SK-N-SH (cell line): ENCODE measurements at regions of chr1 and their contacts with region 1.

Region 1: GRCh38 chr1:88983791-88984559 is 8.5 kb downstream of the KYAT3 start:
- DNase-seq: peak; percentile 39
- H3K4me3 ChIP-seq: peak overlapping the region in 1 of 2 experiments; percentile 21; a peak in 1 of 4 replicates
- H3K27ac ChIP-seq: peak overlapping the region; percentile 83 to 90
- H3K4me1 ChIP-seq: peaks cover 18 to 44% of the 10 kb centered on the region in 2 experiments
- H3K27me3 ChIP-seq: no peaks in the 10 kb centered on the region
- CTCF ChIP-seq: peak; percentile 77
- EP300 ChIP-seq: no peak
- RAD21 ChIP-seq: peak; percentile 74

Region 2: GRCh38 chr1:88973520-88974137 is 10.3 kb before region 1 on chr1:
- CTCF ChIA-PET with region 1: interaction called, 44 read pairs
- POLR2A ChIA-PET with region 1: no interaction called
- DNase-seq: no peak
- H3K4me3 ChIP-seq: no peak overlapping the region
- H3K27ac ChIP-seq: no peak overlapping the region
- H3K4me1 ChIP-seq: no peaks in the 10 kb centered on the region; a peak in 1 of 4 replicates
- H3K27me3 ChIP-seq: no peaks in the 10 kb centered on the region
- CTCF ChIP-seq: peak; percentile 73
- EP300 ChIP-seq: no peak
- RAD21 ChIP-seq: peak; percentile 59

Region 3: GRCh38 chr1:89085781-89086180 is 101.8 kb after region 1 on chr1:
- CTCF ChIA-PET with region 1: interaction called, 11 read pairs
- POLR2A ChIA-PET with region 1: no interaction called
- DNase-seq: peak; percentile 62
- H3K4me3 ChIP-seq: no peak overlapping the region
- H3K27ac ChIP-seq: no peak overlapping the region
- H3K4me1 ChIP-seq: peaks cover 0 to 4% of the 10 kb centered on the region in 2 experiments; a peak in 1 of 4 replicates
- H3K27me3 ChIP-seq: no peaks in the 10 kb centered on the region
- CTCF ChIP-seq: peak; percentile 83
- EP300 ChIP-seq: no peak
- RAD21 ChIP-seq: peak; percentile 92

Region 4: GRCh38 chr1:89358287-89358893 is 374.4 kb after region 1 on chr1:
- CTCF ChIA-PET with region 1: interaction called, 24 read pairs
- POLR2A ChIA-PET with region 1: no interaction called
- DNase-seq: peak; percentile 57
- H3K4me3 ChIP-seq: no peak overlapping the region
- H3K27ac ChIP-seq: no peak overlapping the region
- H3K4me1 ChIP-seq: peaks cover 0 to 1% of the 10 kb centered on the region in 2 experiments; a peak in 2 of 4 replicates
- H3K27me3 ChIP-seq: no peaks in the 10 kb centered on the region
- CTCF ChIP-seq: peak; percentile 82
- EP300 ChIP-seq: 0 out of 4 replicates have a peak, but pooled peaks of 1 of the 2 experiments have one; percentile 4
- RAD21 ChIP-seq: peak; percentile 91

Region 5: GRCh38 chr1:89454845-89455521 is 471.0 kb after region 1 on chr1:
- CTCF ChIA-PET with region 1: interaction called, 13 read pairs
- POLR2A ChIA-PET with region 1: no interaction called
- DNase-seq: peak; percentile 61
- H3K4me3 ChIP-seq: no peak overlapping the region
- H3K27ac ChIP-seq: no peak overlapping the region
- H3K4me1 ChIP-seq: peaks cover 0 to 2% of the 10 kb centered on the region in 2 experiments; a peak in 1 of 4 replicates
- H3K27me3 ChIP-seq: no peaks in the 10 kb centered on the region
- CTCF ChIP-seq: peak; percentile 74
- EP300 ChIP-seq: no peak
- RAD21 ChIP-seq: peak; percentile 93